Spleen (tissue), 13 donors: ENCODE measurements at regions of chr12 and their contacts with region 1.

Region 1: GRCh38 chr12:27733052-27733656 is 22.5 kb downstream of the MRPS35 start:
- DNase-seq: no peak
- H3K4me3 ChIP-seq: no peak overlapping the region
- H3K27ac ChIP-seq: no peak overlapping the region
- H3K4me1 ChIP-seq: no peaks in the 10 kb centered on the region
- H3K27me3 ChIP-seq: no peaks in the 10 kb centered on the region
- CTCF ChIP-seq: peak; percentile 44 to 76 (median 70)
- POLR2A ChIP-seq: no peak

Region 2: GRCh38 chr12:27821259-27821973 is 88.3 kb after region 1 on chr12:
- intact Hi-C with region 1: loop called (anchors 5 kb)
- DNase-seq: no peak
- H3K4me3 ChIP-seq: peak overlapping the region in 1 of 8 donors; percentile 38
- H3K27ac ChIP-seq: no peak overlapping the region
- H3K4me1 ChIP-seq: peaks cover 0 to 12% (median 10%) of the 10 kb centered on the region in 6 donors
- H3K27me3 ChIP-seq: peaks cover 0 to 9% (median 0%) of the 10 kb centered on the region in 7 donors
- CTCF ChIP-seq: peak; percentile 53 to 86 (median 78)
- POLR2A ChIP-seq: no peak

Region 3: DNA sequence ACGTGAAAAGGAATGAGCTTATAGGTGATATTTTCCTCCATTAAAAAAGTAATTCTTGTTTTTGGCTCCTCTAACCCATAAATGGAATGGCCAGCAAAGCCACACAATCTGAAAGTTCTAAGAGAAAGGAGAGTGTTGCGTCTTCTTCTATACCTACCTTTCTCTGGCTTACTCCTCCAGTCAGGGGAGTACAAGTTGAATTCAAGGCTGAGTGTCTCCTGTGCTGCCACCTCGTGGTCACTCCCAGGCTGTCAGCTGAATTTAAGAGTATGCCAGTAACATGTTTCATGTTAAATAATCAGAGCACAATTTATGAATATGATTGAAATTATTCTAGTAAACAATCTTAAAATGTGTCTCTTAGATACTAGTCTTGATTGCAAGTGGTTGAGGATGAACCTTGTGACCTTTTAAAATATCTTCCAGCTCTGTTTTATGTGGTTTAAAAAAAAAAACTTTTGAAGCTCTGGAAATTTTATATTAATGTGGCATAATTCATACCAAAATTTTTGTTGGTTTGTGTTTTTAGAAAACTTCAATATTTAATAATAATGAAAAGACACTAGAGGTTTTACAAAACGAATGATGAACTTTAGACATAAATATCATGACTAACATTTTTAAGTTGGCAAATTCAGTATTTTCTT is 207.7 kb after region 1 on chr12:
- intact Hi-C with region 1: loop called (anchors 5 kb)
- DNase-seq: peak; percentile 77
- H3K4me3 ChIP-seq: no peak overlapping the region
- H3K27ac ChIP-seq: no peak overlapping the region
- H3K4me1 ChIP-seq: no peaks in the 10 kb centered on the region
- H3K27me3 ChIP-seq: no peaks in the 10 kb centered on the region
- CTCF ChIP-seq: peak; percentile 47 to 82 (median 73)
- POLR2A ChIP-seq: no peak